Sigmoid colon (tissue), 7 donors: ENCODE measurements at regions of chr1 and their contacts with region 1.

Region 1: DNA sequence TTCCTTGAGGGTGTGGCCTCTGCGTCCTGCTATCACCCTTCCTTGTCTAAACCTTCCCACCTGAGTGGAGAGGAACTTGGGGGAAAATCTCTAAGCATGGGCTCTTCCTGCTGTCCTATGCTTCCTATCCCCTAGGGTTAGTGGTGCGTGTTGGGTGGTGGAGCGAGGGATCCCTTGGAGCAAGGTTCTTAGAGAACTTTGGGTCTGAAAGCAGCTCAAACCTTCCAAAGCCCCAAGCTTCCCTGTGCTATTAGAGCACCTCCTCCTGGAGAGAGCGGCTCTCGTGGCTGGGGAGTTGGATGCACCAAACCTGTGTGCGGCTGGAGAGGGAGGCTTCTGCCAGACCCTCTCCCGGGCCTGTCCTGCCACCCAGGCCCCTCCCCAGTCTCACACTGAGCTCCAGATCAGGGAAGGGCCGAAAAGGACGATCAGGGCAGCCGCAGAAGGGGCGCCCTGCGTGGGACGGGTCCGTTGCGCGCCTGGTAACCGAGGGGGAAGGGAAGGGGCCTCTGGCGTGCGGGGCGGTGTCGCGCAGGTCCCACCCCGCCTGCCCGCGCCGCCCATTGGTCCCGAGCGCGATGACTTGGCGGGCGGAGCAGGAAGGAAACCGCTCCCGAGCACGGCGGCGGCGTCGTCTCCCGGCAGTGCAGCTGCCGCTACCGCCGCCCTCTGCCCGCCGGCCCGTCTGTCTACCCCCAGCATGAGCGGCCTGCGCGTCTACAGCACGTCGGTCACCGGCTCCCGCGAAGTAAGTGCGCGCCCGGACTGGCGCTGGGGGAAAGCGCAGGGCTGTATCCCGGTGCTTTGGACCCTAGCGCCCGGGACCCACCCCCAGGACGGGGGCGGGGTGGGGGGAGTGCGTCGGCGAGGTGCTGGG is at the start of gene SH3BGRL3:
- DNase-seq: peak; percentile 94
- H3K4me3 ChIP-seq: peak within 1 kb of the TSS; percentile 72 to 84 (median 77)
- H3K27ac ChIP-seq: peak within 1 kb of the TSS; percentile 88 to 98 (median 91)
- H3K4me1 ChIP-seq: peaks cover 0 to 65% (median 54%) of the 10 kb centered on the region in 4 donors
- H3K27me3 ChIP-seq: no peaks in the 10 kb centered on the region
- CTCF ChIP-seq: peak in 3 of 4 experiments; percentile 8 to 24 (median 17)
- EP300 ChIP-seq: peak in 1 of 4 donors; percentile 37
- POLR2A ChIP-seq: peak; percentile 70 to 91
- total RNA-seq, gene SH3BGRL3: 32.9 to 41.5 (median 37.6) TPM

Region 2: DNA sequence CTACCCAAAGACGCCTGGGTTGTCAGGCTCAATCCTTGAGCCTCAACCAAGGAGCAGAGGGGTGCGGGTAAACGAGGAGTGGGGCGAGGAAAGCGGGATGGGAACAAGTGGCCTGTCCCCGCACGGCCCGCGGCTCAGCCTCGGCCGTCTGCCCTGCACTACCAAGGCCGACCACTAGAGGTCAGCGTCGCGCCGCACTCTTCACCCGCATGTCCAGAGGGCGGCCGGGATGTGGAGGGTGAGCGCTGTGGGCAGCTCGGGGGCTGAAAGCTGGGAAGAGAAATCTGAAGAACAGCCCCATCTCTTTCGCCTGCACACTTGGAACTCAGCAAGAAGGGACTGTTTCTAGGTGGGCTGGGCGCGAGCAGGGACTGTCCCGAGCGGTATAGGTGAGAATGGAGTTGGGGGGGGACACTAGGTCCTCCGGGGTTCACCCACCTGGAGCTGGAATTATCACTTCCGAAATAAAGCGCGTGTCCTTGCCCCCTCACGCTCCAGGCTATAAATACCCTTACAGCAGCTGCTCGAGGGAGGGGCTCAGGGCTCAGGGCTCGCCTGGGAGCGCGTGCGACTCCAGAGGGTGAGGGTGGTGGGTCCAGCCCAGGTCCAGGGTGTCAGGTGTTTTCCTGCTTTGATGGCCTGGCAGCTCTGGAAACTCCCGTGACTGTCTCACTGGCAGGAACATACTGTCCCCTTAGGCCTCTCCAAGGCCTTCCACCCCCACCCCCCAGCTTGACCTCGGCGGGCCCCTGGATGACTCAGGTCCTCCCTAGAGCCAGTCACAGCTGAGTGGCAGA is 243.5 kb before region 1 on chr1:
- intact Hi-C with region 1: no loop called
- DNase-seq: peak; percentile 86
- H3K4me3 ChIP-seq: peak overlapping the region; percentile 58 to 80 (median 75)
- H3K27ac ChIP-seq: peak overlapping the region; percentile 84 to 91 (median 88)
- H3K4me1 ChIP-seq: peaks cover 0 to 15% (median 11%) of the 10 kb centered on the region in 4 donors
- H3K27me3 ChIP-seq: peaks cover 0 to 7% (median 0%) of the 10 kb centered on the region in 3 donors
- CTCF ChIP-seq: peak; percentile 97 to 100 (median 99)
- EP300 ChIP-seq: no peak
- POLR2A ChIP-seq: no peak

Region 3: GRCh38 chr1:26083246-26083645 is 196.4 kb before region 1 on chr1:
- intact Hi-C with region 1: no loop called
- DNase-seq: no peak
- H3K4me3 ChIP-seq: no peak overlapping the region
- H3K27ac ChIP-seq: no peak overlapping the region
- H3K4me1 ChIP-seq: no peaks in the 10 kb centered on the region
- H3K27me3 ChIP-seq: peaks cover 0 to 22% (median 3%) of the 10 kb centered on the region in 3 donors
- CTCF ChIP-seq: no peak
- EP300 ChIP-seq: no peak
- POLR2A ChIP-seq: no peak

Region 4: DNA sequence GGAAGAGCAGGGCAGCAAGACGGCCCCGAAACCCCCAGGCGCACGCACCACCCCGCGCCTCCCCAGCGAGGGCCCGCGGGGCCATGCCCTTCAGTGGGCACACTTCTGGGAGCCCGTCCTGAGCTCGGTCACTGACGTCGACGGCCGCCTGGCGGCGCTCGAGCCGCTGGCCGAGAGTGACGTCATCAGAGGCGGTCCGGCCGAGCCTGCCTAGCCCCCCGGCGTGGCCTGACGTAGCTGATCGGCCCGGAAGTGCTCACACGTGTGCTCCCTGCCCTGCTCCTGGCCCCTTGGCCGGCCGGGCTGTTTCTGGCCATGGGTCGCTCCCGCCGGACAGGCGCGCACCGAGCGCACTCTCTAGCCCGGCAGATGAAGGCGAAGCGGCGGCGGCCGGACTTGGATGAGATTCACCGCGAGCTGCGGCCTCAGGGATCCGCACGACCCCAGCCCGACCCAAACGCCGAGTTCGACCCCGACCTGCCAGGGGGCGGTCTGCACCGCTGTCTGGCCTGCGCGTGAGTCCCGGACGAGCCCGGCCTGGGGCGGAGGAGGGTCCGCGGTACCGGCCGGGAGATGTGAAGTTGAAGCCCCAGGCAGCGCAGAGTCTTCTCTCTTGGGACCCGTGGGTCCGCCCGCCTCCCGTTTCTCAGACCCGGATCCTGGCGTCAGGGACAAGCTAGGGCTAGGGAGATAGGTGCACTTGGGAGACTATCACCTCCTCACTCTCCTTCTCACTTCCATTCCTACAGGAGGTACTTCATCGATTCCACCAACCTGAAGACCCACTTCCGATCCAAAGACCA is 109.8 kb before region 1 on chr1 and contains the start of gene ZNF593:
- intact Hi-C with region 1: loop called (anchors 5 kb)
- DNase-seq: peak; percentile 97
- H3K4me3 ChIP-seq: peak within 1 kb of the TSS; percentile 84 to 93 (median 86)
- H3K27ac ChIP-seq: peak within 1 kb of the TSS; percentile 78 to 85 (median 82)
- H3K4me1 ChIP-seq: peaks cover 0 to 21% (median 14%) of the 10 kb centered on the region in 4 donors
- H3K27me3 ChIP-seq: no peaks in the 10 kb centered on the region
- CTCF ChIP-seq: peak; percentile 88 to 91 (median 90)
- EP300 ChIP-seq: no peak
- POLR2A ChIP-seq: no peak
- total RNA-seq, gene ZNF593: 16.3 to 37.2 (median 32.1) TPM

Region 5: DNA sequence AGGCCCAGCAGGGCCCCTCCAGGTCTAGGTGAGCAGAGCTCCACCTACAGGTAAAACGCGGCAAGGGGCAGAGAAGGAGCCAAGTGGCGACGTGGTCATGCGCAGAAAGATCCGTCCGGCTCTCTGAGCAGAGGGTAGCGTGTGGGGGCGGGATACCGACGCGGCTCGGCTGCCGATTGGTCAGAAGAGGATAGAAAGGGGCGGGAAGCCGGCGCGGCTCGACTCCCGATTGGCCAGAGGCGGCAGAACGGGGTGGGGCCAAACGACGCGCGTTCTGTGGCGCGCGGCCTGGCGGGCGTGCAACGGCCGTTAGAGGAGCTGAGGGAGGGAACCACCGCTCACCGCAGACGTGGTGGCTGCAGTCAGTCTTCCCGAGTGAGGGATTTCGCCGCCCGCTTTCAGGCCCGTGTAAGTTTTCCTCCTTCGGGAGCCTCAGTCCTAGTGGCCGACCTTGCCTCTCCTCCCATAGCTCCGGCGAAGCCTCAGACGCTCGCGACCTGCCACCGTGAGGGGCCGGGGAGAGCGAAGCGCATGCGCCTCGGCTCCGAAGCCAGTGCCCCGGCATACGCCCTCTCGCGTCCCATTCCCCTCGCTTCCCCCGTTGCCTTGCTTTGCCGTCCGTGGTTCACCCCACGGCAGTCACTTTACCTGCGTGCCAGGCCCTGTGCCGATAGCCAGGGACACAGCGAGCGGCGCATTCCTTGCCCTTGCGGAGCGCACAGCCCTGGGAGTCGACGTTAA is 45.6 kb before region 1 on chr1 and contains the start of gene CEP85:
- intact Hi-C with region 1: loop called (anchors 5 kb)
- DNase-seq: peak; percentile 99
- H3K4me3 ChIP-seq: peak within 1 kb of the TSS; percentile 58 to 67 (median 60)
- H3K27ac ChIP-seq: peak within 1 kb of the TSS; percentile 89 to 94 (median 90)
- H3K4me1 ChIP-seq: peaks cover 0 to 13% (median 8%) of the 10 kb centered on the region in 4 donors
- H3K27me3 ChIP-seq: peaks cover 0 to 3% (median 0%) of the 10 kb centered on the region in 3 donors
- CTCF ChIP-seq: peak in 3 of 4 experiments; percentile 33 to 79 (median 66)
- EP300 ChIP-seq: no peak
- POLR2A ChIP-seq: peak; percentile 54 to 80
- total RNA-seq, gene CEP85: 1.9 to 5.4 (median 3.3) TPM

Region 6: DNA sequence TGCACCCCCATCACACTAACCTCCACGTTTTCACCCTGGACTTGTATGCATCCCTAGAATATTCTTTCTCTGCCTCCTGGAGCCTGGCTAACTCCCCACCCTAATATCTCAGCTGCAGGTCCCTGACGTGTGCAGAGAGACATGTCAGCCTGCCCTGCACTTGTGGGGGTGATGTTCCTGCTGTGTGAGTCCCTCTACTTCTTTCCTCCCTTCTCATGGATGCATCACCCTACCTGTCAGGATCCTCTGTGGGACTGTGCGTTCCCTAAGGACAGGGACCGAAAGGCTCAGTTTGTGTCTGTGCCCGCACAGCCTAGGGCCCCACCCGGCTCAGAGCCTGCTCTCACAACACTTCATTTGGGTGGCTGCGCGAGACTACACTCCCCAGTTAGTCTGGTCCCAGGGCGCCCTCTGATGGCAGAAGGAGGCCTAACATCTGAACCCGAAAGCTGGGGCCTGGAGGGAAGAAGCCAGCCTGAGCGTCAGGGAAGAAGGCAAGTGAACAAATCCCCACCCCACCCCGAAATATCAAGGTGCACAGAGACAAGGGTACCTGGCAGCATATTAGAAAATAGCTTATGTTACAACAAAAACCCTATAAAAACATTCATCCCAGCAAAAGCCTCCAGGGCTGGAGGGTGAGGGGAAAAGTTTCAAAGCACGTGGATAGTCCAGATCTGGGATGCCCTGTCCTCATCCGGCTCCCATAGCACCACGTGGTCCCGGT is 41.8 kb after region 1 on chr1:
- intact Hi-C with region 1: loop called (anchors 1 kb)
- DNase-seq: peak; percentile 96
- H3K4me3 ChIP-seq: no peak overlapping the region
- H3K27ac ChIP-seq: no peak overlapping the region
- H3K4me1 ChIP-seq: peaks cover 0 to 6% (median 5%) of the 10 kb centered on the region in 4 donors
- H3K27me3 ChIP-seq: no peaks in the 10 kb centered on the region
- CTCF ChIP-seq: peak; percentile 83 to 93 (median 86)
- EP300 ChIP-seq: no peak
- POLR2A ChIP-seq: no peak

Region 7: DNA sequence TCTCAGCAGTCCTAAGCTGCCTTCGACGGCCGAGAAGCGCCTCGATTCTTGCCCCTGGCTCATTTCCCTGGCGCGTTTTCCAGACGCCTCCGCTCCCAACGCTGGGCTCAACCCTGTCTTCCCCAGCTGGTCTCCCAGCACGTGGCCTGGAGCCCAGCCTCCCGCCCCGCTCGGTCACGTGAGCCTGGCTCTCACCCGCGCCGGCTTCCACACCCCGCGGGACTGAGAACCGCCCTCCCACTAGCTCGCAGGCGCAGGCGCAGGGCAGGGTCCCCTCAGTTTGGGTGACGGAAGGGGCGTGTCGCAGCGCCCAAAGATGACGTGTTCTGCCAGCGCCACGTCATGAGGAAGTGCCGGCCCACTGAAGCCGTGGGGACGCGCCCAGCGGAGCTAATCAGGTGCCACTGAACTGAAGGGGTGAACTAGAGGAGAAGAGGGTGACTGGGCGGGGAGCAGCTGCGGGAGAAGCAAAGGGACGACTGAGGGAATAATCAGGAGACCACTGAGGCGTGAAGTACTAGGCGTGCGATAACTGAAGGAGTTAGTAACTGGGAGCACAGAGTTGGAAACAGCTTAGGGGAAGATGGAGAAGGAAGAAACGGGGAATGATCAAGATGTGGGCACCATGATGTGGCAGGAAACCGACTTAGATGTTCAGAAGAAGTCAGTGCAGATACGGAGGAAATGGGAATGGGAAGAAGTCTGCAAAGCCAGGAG is 152.4 kb after region 1 on chr1 and contains the start of gene DHDDS:
- intact Hi-C with region 1: loop called (anchors 5 kb)
- DNase-seq: peak; percentile 99
- H3K4me3 ChIP-seq: peak within 1 kb of the TSS; percentile 45 to 67 (median 63)
- H3K27ac ChIP-seq: peak within 1 kb of the TSS; percentile 76 to 84 (median 81)
- H3K4me1 ChIP-seq: peaks cover 0 to 29% (median 20%) of the 10 kb centered on the region in 4 donors
- H3K27me3 ChIP-seq: no peaks in the 10 kb centered on the region
- CTCF ChIP-seq: no peak
- EP300 ChIP-seq: peak in 1 of 4 donors; percentile 87
- POLR2A ChIP-seq: peak; percentile 83 to 94
- total RNA-seq, gene DHDDS: 16.6 to 33.5 (median 24.7) TPM

Region 8: DNA sequence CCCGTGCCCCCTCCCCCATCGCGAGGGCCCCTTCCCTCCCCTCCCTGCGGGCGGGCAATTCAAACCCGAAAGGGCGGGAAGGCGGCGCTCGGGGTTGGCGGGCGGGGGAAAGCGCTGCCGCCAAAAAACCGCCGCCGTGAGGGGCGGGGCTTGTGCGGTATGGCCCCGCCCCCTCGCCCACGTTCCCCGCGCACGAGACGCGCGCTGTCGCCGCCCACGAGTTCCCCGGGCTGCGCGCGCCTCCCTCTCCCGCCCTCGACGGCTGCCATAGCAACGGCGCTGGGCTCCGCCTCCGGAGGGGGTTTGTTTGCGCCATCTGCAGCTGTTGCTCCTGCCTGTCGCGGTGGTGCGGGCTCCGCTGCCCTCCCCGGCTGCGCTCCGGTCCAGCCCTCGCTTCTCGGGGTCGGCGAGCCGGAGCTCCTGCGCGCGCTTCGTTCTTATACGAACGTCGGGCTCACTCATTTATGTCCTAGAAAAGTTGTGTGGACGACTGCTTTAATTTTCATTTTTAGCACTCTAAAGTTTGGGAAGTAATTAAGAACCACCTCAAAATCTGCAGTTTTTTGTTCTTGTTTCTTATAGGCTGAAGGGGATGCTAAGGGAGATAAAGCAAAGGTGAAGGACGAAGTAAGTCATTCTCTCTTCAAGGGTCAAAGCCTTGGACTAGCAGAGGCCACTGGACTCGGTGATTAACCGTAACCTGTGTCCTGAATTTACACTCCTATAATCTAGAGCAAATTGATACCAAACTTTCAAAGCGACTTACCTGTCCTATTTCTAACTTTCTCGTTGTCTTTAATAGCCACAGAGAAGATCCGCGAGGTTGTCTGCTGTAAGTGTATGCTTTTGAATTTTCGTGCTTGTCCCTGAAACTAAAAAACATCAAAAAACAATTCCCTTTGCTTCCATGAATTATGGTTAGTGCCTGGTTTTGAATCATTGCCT is 193.5 kb after region 1 on chr1:
- intact Hi-C with region 1: loop called (anchors 5 kb)
- DNase-seq: peak; percentile 99
- H3K4me3 ChIP-seq: peak overlapping the region; percentile 91 to 99 (median 98)
- H3K27ac ChIP-seq: peak overlapping the region; percentile 100
- H3K4me1 ChIP-seq: peaks cover 0 to 33% (median 26%) of the 10 kb centered on the region in 4 donors
- H3K27me3 ChIP-seq: no peaks in the 10 kb centered on the region
- CTCF ChIP-seq: no peak
- EP300 ChIP-seq: peak in 1 of 4 donors; percentile 79
- POLR2A ChIP-seq: peak in 1 of 2 donors; percentile 27

Region 9: GRCh38 chr1:26524181-26524580 is 244.5 kb after region 1 on chr1:
- intact Hi-C with region 1: no loop called
- DNase-seq: no peak
- H3K4me3 ChIP-seq: no peak overlapping the region
- H3K27ac ChIP-seq: no peak overlapping the region
- H3K4me1 ChIP-seq: no peaks in the 10 kb centered on the region
- H3K27me3 ChIP-seq: peaks cover 0 to 15% (median 0%) of the 10 kb centered on the region in 3 donors
- CTCF ChIP-seq: no peak
- EP300 ChIP-seq: no peak
- POLR2A ChIP-seq: no peak